WTC11 (cell line): ENCODE measurements at regions of chr10 and their contacts with region 1.

Region 1: DNA sequence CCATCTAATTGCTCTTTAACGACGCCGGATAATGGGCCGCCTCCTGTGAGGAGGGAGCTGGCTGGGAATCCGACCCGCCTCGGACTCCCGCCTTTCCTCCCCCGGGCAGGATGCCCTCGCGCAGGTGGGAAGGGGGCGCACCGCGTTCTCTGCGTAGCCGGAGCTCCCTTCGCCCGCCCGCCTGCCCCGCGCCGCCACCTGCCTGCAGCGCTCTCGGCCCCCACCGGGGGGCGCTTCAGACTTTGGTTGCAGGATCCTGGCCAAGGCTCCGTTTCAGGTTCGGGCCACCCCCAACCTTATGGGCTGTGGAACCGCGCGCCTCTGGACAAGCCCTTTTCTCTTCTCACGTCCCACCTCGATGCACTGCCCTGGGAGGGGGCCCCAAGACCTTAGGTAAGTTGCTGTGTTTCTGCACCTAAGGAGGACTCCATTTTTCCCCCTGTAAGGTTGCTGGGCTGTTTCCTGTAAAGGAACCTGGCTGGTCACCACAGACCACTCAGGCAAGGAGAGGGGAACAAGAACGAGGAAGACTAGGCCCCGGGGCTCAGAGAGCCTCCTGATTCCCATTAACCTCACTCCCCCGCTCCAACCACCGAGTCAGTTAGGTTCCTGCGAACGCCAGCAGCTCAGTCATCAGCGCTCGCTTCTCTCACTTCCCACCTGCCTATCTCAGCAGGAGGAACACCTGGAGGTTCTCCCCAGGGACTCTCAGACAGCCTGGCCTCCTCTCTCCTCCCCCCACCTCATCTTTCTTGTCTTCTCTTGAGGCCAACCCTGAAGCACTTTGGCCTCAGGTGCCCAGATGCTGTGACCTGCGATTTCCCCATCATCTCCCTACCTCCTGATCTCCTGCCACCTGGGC is 11.3 kb upstream of the KAZALD1 start:
- DNase-seq: peak; percentile 95
- ATAC-seq: peak; percentile 68
- H3K4me3 Mint-ChIP-seq: peak overlapping the region; percentile 60
- H3K27ac Mint-ChIP-seq: no peak overlapping the region
- H3K4me1 Mint-ChIP-seq: peaks cover 41% of the 10 kb centered on the region
- H3K27me3 Mint-ChIP-seq: peaks cover 67% of the 10 kb centered on the region
- CTCF ChIP-seq: peak; percentile 86

Region 2: GRCh38 chr10:100791369-100792058 is 258.9 kb before region 1 on chr10:
- CTCF ChIA-PET with region 1: no interaction called
- POLR2A ChIA-PET with region 1: no interaction called
- DNase-seq: no peak
- ATAC-seq: no peak
- H3K4me3 Mint-ChIP-seq: no peak overlapping the region
- H3K27ac Mint-ChIP-seq: no peak overlapping the region
- H3K4me1 Mint-ChIP-seq: peaks cover 46% of the 10 kb centered on the region
- H3K27me3 Mint-ChIP-seq: no peaks in the 10 kb centered on the region; the same call in 1 of the 2 replicates
- CTCF ChIP-seq: no peak

Region 3: GRCh38 chr10:100934084-100934659 is 116.3 kb before region 1 on chr10:
- CTCF ChIA-PET with region 1: no interaction called
- POLR2A ChIA-PET with region 1: no interaction called
- DNase-seq: no peak
- ATAC-seq: no peak
- H3K4me3 Mint-ChIP-seq: no peak overlapping the region
- H3K27ac Mint-ChIP-seq: no peak overlapping the region
- H3K4me1 Mint-ChIP-seq: no peaks in the 10 kb centered on the region
- H3K27me3 Mint-ChIP-seq: no peaks in the 10 kb centered on the region
- CTCF ChIP-seq: peak; percentile 39; the same call in 1 of the 2 replicates

Region 4: GRCh38 chr10:101012525-101013364 is 37.7 kb before region 1 on chr10:
- CTCF ChIA-PET with region 1: interaction called, 83 read pairs
- POLR2A ChIA-PET with region 1: no interaction called
- DNase-seq: peak; percentile 84
- ATAC-seq: peak; percentile 68
- H3K4me3 Mint-ChIP-seq: no peak overlapping the region
- H3K27ac Mint-ChIP-seq: no peak overlapping the region
- H3K4me1 Mint-ChIP-seq: peaks cover 33% of the 10 kb centered on the region
- H3K27me3 Mint-ChIP-seq: peaks cover 34% of the 10 kb centered on the region
- CTCF ChIP-seq: peak; percentile 63

Region 5: DNA sequence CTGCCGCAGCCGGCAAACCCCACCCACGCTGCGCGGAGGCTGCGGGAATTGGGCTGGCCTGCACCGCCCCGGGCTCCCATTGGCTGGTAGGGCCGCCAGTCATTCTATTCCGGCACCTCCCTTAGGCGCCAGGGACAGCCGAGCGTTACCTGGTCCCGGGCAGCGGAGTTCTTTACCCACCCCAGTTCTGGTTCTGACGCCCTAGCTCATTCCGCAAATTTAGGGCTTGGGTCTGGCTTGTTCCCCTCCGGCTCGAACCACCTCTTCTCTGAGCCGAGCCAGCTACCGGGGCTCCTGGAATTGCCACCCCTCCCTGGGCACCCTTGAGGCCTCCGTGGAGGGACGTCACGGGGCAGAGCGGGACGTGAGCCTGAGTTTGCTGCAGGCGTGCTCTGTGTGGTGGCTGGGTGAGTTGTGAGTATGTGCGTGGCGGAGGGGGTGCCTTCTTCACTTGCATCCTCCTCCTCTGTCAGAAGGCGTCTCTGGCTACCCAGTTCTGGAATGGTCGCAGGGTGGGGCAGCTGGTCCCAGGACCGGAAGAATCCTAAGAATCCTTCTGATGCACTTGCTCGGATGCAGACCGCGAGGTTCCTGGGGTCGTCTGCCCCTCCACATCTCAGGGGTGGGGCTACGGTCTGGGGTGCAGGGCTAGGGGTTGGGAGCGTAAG is 19.2 kb before region 1 on chr10 and contains the starts of genes PDZD7 and SFXN3:
- CTCF ChIA-PET with region 1: interaction called, 143 read pairs
- POLR2A ChIA-PET with region 1: no interaction called
- DNase-seq: peak; percentile 97
- ATAC-seq: peak; percentile 88
- H3K4me3 Mint-ChIP-seq: peak within 1 kb of the TSS; percentile 75
- H3K27ac Mint-ChIP-seq: no peak within 1 kb of the TSS
- H3K4me1 Mint-ChIP-seq: peaks cover 36% of the 10 kb centered on the region
- H3K27me3 Mint-ChIP-seq: peaks cover 55% of the 10 kb centered on the region
- CTCF ChIP-seq: no peak
- total RNA-seq, gene PDZD7: 1.9 to 2.7 TPM (median 2.6 TPM) in 3 replicates
- total RNA-seq, gene SFXN3: 2.5 to 5.6 TPM (median 3.2 TPM) in 3 replicates

Region 6: GRCh38 chr10:101080933-101081931 is 30.8 kb after region 1 on chr10:
- CTCF ChIA-PET with region 1: interaction called, 44 read pairs
- POLR2A ChIA-PET with region 1: interaction called, 5 read pairs
- DNase-seq: peak; percentile 66
- ATAC-seq: peak; percentile 75
- H3K4me3 Mint-ChIP-seq: no peak overlapping the region
- H3K27ac Mint-ChIP-seq: no peak overlapping the region
- H3K4me1 Mint-ChIP-seq: peaks cover 3% of the 10 kb centered on the region
- H3K27me3 Mint-ChIP-seq: peaks cover 64% of the 10 kb centered on the region
- CTCF ChIP-seq: no peak

Region 7: DNA sequence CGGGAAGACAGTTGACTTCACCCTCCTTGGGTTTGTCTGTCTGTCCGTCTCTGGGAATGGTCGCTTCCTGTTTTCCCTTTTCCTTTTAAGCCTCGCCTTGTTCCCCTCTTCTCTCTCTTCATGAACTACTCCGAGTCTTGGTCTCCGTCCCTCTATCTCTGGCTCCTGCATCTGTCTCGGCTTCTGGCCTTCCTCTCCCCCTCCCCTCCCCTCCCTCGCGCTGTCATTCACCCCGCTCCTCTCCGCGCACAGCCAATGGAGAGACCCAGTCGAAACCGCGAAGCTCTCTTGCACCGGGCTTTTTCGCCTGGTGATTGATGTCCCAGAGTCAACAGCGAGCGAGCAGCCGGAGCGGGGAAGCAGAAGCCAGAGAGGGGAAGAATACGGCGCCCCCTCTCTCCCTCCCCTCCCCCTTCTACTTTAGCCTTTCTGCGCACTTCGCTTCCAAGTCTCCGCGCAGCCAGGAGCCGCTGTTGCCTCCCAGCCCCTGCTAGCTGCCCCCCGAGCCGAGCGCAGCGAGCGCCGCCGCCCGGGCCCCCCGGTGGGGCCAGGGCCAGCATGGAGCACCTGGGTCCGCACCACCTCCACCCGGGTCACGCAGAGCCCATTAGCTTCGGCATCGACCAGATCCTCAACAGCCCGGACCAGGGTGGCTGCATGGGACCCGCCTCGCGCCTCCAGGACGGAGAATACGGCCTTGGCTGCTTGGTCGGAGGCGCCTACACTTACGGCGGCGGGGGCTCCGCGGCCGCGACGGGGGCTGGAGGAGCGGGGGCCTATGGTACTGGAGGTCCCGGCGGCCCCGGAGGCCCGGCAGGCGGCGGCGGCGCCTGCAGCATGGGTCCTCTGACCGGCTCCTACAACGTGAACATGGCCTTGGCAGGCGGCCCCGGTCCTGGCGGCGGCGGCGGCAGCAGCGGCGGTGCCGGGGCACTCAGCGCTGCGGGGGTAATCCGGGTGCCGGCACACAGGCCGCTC is 80.8 kb after region 1 on chr10 and contains the start of gene TLX1:
- CTCF ChIA-PET with region 1: interaction called, 12 read pairs
- POLR2A ChIA-PET with region 1: no interaction called
- DNase-seq: peak; percentile 74
- ATAC-seq: peak; percentile 46
- H3K4me3 Mint-ChIP-seq: peak within 1 kb of the TSS; percentile 59
- H3K27ac Mint-ChIP-seq: no peak within 1 kb of the TSS
- H3K4me1 Mint-ChIP-seq: peaks cover 39% of the 10 kb centered on the region
- H3K27me3 Mint-ChIP-seq: peaks cover 98% of the 10 kb centered on the region
- CTCF ChIP-seq: no peak
- total RNA-seq, gene TLX1: 2.1 to 4.6 TPM (median 2.3 TPM) in 3 replicates

Region 8: DNA sequence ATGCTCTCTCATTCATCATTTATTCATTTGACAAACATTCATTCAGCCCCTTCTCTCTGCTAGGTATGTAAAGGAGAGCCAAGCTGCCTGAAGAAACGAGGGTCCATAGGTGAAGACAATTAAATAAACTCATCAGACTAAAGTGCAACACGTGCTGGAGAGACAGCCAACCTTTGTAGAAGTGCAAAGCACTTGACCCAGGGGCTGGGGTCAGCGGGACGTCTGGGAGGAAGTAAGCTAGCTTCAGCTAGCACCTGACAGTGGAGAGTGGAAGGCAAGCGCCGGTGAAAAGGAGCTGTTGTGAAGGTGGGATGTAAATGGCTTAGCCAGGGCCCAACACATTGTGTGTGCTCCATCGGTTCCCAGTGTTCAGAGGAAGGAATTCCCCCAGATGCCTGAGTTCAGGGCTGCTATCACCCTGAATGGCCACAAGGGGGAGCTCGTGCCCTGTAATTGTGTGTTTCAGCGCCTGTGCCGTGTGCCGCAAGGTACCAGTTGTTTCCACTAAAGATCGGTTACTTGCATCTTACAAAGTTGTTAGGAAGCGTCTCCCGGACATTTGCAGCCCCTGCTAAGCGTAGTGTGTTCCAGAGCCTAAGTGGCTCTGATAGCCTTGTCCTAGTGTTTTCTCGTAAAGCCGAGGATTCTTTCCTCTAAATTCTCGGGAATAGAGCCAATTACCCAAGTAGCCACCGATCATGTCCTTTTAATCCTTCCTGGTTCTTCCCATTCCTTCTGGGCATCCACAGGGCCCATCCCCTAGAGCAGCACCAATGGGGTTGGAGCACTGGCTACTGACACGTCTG is 111.3 kb after region 1 on chr10:
- CTCF ChIA-PET with region 1: interaction called, 11 read pairs
- POLR2A ChIA-PET with region 1: no interaction called
- DNase-seq: peak; percentile 83
- ATAC-seq: peak; percentile 96
- H3K4me3 Mint-ChIP-seq: peak overlapping the region; percentile 55
- H3K27ac Mint-ChIP-seq: no peak overlapping the region; the same call in 1 of the 2 replicates
- H3K4me1 Mint-ChIP-seq: peaks cover 37% of the 10 kb centered on the region
- H3K27me3 Mint-ChIP-seq: peaks cover 52% of the 10 kb centered on the region
- CTCF ChIP-seq: peak; percentile 97